HEK293 (cell line): ENCODE measurements at regions of chr1 and their contacts with region 1.

Region 1: GRCh38 chr1:8314346-8315280 is 3.3 kb upstream of the SLC45A1 start:
- H3K4me3 ChIP-seq: no peak overlapping the region
- H3K27ac ChIP-seq: no peak overlapping the region
- H3K4me1 ChIP-seq: no peaks in the 10 kb centered on the region
- CTCF ChIP-seq: peak; percentile 85

Region 2: DNA sequence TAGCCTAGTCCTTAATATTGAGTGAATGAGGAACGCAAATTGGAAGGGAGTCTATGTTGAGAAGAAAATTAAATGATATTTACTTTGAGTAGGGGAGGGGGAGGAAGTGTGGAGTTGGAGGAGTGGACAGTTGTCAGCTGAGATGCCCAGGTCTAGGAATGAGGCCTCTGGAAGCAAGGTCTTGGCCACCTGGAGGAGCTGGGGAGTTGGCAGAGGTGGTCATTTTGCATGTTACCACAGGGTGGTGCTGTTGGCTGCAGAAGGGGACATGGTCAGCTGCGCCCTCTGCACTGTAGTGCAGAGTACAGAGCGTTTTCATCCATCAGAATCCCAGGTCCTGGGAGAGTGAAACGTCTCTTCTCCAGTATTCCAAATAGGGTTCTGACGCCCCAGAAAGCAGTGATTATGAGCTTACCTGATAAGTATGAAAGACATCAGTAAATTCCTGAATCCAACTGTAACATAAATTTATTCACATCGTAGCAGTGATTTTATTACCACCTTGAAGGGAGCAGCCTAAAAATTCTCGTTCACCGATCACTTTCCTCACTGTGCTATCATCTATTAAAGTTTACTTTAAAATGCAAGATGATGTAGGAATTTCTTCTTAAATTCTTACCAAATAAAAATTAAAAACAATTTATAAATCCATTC is 339.3 kb before region 1 on chr1:
- CTCF ChIA-PET with region 1: interaction called, 81 read pairs
- POLR2A ChIA-PET with region 1: no interaction called
- H3K4me3 ChIP-seq: no peak overlapping the region
- H3K27ac ChIP-seq: no peak overlapping the region
- H3K4me1 ChIP-seq: no peaks in the 10 kb centered on the region
- CTCF ChIP-seq: peak; percentile 99

Region 3: DNA sequence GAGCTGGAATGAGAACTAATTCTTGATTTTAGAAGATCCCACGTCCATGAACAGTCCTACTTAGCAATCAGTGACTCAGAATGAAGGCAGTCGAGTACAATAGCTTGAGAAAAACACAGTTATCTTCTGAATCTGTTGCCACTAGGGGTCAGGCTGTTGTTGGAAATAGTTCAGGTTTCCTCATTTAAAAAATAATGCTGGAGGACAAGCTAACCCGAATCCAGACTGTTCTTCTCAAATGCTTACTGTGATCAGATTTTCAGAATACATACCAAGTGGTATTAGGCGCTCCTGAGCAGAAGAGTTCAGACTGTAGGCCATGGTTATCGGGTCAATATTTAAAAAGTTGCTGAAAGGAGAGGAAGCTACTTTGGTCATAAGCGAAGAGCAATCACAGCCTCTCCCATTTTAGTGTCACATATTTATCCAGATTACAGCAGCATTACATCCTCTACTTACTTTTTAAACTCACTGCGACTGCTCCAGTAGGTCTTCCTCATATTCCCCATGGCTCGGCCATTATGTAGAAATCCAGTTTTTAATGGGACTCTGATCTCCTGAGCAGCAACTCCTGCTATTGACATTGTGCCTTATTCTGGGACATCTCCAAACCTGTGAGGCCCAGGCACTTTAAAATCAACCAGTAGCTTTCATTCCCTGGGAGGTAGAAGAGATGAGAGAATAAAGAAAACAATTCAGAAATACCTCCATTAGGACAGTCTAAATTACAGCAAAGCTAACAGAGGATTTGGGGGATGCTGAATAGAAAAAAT is 299.4 kb before region 1 on chr1:
- CTCF ChIA-PET with region 1: interaction called, 169 read pairs
- POLR2A ChIA-PET with region 1: interaction called, 6 read pairs
- H3K4me3 ChIP-seq: no peak overlapping the region
- H3K27ac ChIP-seq: no peak overlapping the region
- H3K4me1 ChIP-seq: peaks cover 44% of the 10 kb centered on the region
- CTCF ChIP-seq: peak; percentile 42; the same call in 1 of the 2 replicates

Region 4: GRCh38 chr1:8040586-8040985 is 274.0 kb before region 1 on chr1:
- CTCF ChIA-PET with region 1: interaction called, 10 read pairs
- POLR2A ChIA-PET with region 1: no interaction called
- H3K4me3 ChIP-seq: no peak overlapping the region
- H3K27ac ChIP-seq: no peak overlapping the region
- H3K4me1 ChIP-seq: no peaks in the 10 kb centered on the region; the same call in 1 of the 2 replicates
- CTCF ChIP-seq: no peak

Region 5: DNA sequence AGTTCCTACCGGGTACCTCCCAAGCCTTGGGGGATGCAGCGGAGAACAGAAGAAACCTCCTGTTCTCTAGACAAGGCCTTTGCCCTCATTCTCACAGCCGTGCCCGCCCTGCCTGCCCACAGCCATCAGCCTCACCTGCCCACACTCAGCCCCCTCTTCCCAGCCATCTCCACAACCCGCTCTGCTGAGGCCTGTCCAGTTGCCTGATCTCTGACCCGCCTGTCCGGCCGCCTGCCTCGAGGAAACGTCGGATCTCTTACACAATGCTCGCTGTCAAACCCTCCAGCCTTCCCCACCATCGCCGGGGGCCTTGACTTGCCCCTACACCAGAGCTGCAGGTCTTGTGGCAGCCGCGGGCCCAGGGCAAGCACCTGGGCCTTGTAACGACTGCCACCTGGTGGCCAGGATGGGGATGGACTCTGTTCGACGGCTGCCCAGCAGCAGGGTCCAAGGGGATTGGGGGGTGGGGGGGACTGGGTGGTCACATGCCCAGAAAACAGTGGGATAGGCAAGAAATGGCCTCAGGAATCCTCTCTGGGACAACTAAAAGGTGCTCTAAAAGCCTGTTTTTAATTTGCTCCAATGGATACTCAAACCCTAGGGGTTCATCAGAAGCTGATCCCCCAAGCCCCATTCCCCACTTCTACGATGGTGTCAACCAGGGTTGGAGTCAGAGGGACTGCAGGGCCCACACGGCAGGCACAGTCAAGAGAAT is 34.3 kb after region 1 on chr1:
- CTCF ChIA-PET with region 1: interaction called, 49 read pairs
- POLR2A ChIA-PET with region 1: interaction called, 4 read pairs
- H3K4me3 ChIP-seq: no peak overlapping the region
- H3K27ac ChIP-seq: no peak overlapping the region
- H3K4me1 ChIP-seq: no peaks in the 10 kb centered on the region; the same call in 1 of the 2 replicates
- CTCF ChIP-seq: peak; percentile 72

Region 6: DNA sequence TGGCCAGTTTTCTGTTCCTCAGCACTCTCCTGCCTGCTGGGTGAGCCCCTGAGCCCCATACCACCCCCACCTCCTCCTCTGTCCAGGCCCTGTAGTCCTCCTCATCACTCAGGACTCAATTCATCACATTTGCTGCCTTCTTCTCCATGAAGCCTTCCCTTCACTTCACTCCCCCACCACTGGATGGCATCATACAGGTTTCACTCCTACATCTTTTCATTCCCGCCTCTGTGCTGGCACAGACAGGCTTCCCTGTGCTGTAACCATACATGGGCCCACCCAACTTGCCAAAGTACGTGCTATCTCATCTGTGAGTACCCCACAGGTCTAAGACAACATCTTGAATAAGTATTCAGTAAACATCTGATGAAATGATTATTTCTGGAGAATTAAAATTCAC is 60.2 kb after region 1 on chr1:
- CTCF ChIA-PET with region 1: no interaction called
- POLR2A ChIA-PET with region 1: no interaction called
- H3K4me3 ChIP-seq: no peak overlapping the region
- H3K27ac ChIP-seq: no peak overlapping the region
- H3K4me1 ChIP-seq: peaks cover 14% of the 10 kb centered on the region
- CTCF ChIP-seq: peak; percentile 66; the same call in 1 of the 2 replicates